ENCODE measurements at regions of chr13 and their contacts with region 1.

Region 1: DNA sequence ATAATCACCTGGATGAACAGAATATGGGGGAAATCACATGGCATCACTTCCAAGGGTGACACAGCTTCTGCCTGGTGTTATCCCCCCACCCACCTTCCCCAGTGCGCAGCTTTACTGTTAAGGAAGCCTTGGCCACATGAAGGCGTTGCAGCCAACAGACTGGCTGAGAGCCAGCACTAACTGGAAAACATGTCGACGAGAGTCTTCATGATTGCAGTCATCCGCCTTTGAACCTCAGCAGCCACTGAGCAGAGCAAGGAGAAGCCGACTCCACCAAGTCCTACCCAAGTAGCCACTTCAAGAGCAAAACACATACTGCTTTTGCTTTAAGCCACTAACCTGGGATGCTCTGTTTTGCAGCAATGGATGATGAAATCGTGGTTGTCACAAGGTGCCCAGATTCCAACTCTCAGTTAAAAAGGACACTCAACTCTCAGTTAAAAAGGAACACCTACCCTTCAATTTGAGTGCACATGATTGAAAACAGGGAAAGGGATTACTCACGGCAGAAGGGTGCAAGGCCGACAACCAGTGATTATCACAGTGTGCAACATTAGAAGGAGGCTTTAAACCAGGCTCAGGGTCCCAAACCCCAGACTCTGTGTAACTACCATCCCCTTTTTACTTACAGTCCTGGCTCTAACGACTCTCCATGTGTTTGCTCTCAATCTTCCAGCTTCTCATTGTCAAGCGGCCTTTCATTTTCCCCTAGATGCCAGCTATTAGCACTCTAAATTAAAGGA is 149.1 kb downstream of the KLF12 start:
- DNase-seq: peak; percentile 95
- H3K4me3 Mint-ChIP-seq: peak overlapping the region; percentile 73
- H3K27ac Mint-ChIP-seq: peak overlapping the region; percentile 96
- H3K4me1 Mint-ChIP-seq: peaks cover 39% of the 10 kb centered on the region
- H3K27me3 Mint-ChIP-seq: no peaks in the 10 kb centered on the region

Region 2: GRCh38 chr13:73715114-73715910 is 269.8 kb before region 1 on chr13:
- CTCF ChIA-PET with region 1: no interaction called
- intact Hi-C with region 1: loop called (anchors 1 kb)
- DNase-seq: peak; percentile 76
- H3K4me3 Mint-ChIP-seq: peak overlapping the region; percentile 68
- H3K27ac Mint-ChIP-seq: peak overlapping the region; percentile 68
- H3K4me1 Mint-ChIP-seq: peaks cover 53% of the 10 kb centered on the region
- H3K27me3 Mint-ChIP-seq: no peaks in the 10 kb centered on the region

Region 3: DNA sequence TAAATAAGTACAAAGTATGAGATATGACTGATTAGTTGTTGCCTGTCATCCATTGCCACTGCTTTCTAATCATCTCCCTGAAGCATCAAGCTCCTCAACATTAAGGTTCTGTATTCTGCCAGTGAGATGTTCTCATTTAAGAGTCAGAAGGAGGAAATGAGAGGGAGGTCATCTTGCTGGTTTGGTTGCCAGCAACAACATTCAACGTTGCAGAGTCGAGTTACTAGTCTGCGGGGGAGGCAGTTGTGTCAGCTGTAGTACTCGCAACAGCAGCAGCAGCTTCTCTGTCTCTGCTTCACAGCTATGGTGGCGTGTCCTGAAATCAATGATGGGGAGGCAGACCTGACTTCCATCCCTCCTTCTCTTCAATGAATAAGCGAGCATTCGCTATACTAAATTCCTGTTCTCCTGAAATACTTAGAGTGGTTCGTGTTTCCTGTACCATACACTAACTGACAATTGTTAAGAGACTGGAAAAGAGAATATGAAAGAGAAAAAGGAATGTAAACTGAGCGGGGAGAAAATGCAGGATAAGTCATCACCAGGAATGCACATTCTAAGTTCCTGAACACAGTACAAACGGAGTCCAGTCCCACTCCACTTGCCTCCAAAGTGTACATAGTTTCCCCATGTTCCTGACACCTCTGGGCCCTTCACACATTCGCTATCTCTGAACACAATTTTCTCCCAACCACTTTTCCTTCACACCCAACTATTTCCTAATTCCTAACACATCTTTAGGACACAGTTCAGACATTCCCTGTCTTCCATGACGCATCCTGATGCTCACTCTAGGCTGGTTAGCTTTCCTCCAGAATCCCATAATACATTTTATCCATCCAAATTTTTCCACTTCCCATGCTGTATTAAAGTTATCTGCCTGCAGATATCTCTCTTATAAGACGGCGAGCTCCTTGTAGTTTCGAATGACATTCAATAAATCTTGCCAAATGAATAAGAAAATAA is 113.9 kb before region 1 on chr13:
- CTCF ChIA-PET with region 1: no interaction called
- intact Hi-C with region 1: loop called (anchors 1 kb)
- DNase-seq: peak; percentile 43
- H3K4me3 Mint-ChIP-seq: no peak overlapping the region
- H3K27ac Mint-ChIP-seq: no peak overlapping the region
- H3K4me1 Mint-ChIP-seq: peaks cover 50% of the 10 kb centered on the region
- H3K27me3 Mint-ChIP-seq: no peaks in the 10 kb centered on the region

Region 4: DNA sequence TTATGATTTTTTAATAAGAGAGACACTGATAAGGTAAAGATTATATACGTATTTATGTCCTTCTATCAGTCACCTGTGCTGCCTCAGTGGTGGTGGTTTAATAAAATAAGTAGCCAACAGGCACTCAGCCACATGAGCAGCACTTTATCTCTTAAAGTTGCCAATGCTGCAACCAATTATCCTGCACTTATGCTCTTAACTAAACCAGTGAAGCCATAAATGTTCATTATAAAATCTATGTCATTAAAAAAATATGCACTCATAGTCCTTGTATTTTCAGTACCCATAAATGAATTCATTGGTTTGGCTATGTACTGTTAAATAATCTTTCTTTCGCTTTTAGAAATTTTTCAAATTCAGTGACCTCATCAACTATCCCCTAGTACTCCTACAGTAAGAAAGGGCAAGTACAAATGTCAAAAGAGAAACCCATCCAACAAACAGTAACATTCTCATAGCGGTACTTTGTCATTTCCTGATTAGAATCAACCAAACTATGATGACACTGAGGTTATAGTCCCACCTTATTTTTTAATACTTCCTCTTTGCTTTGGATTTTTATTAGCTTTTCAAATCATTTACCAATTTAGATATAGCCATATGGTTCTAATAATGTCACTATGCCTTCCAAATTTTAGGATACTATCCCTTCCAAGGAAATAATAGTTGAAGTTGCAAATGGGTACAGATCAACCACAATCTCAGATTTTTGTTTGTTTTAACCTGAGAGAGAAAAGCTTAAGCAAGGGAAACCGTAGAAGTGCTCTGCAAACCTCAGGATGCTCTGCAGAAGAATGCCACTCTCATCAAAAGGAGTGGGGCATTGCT is 41.8 kb before region 1 on chr13:
- CTCF ChIA-PET with region 1: no interaction called
- intact Hi-C with region 1: loop called (anchors 1 kb)
- DNase-seq: no peak
- H3K4me3 Mint-ChIP-seq: peak overlapping the region; percentile 33
- H3K27ac Mint-ChIP-seq: peak overlapping the region; percentile 74
- H3K4me1 Mint-ChIP-seq: peaks cover 74% of the 10 kb centered on the region
- H3K27me3 Mint-ChIP-seq: no peaks in the 10 kb centered on the region

Region 5: DNA sequence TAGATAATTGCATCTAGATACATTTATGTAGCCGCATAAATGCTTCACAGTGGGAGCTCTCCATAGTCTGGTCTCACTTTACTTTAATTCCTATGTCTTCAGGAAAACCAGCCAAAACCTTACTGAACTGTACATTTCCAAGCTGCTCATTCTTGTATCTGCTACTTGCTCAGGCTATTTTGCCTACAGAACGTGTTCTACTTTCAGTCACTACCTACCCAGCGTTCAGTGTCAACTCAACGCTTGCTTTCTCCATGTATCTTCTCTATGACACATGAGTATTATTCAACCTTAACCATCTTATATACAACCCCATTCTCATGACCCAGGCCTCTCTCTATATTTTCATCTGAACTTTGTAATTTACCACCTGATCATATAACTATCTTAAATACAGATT is 47.2 kb after region 1 on chr13:
- CTCF ChIA-PET with region 1: no interaction called
- intact Hi-C with region 1: no loop called
- DNase-seq: no peak
- H3K4me3 Mint-ChIP-seq: no peak overlapping the region
- H3K27ac Mint-ChIP-seq: no peak overlapping the region
- H3K4me1 Mint-ChIP-seq: peaks cover 52% of the 10 kb centered on the region
- H3K27me3 Mint-ChIP-seq: no peaks in the 10 kb centered on the region

Region 6: GRCh38 chr13:74062933-74063332 is 77.8 kb after region 1 on chr13:
- CTCF ChIA-PET with region 1: no interaction called
- intact Hi-C with region 1: loop called (anchors 2 kb)
- DNase-seq: peak; percentile 62
- H3K4me3 Mint-ChIP-seq: peak overlapping the region; percentile 73
- H3K27ac Mint-ChIP-seq: peak overlapping the region; percentile 86
- H3K4me1 Mint-ChIP-seq: peaks cover 78% of the 10 kb centered on the region
- H3K27me3 Mint-ChIP-seq: no peaks in the 10 kb centered on the region

Measured in activated naive CD4-positive, alpha-beta T cell treated with anti-CD3 and anti-CD28 coated beads for 36 hours (primary cell).